Colonic mucosa (tissue), 4 donors: ENCODE measurements at regions of chr12 and their contacts with region 1.

Region 1: GRCh38 chr12:124786061-124786964 is 77.4 kb downstream of the SCARB1 start:
- DNase-seq: peak; percentile 49
- H3K4me3 ChIP-seq: no peak overlapping the region
- H3K27ac ChIP-seq: no peak overlapping the region
- H3K4me1 ChIP-seq: no peaks in the 10 kb centered on the region
- H3K27me3 ChIP-seq: no peaks in the 10 kb centered on the region
- CTCF ChIP-seq: no peak

Region 2: DNA sequence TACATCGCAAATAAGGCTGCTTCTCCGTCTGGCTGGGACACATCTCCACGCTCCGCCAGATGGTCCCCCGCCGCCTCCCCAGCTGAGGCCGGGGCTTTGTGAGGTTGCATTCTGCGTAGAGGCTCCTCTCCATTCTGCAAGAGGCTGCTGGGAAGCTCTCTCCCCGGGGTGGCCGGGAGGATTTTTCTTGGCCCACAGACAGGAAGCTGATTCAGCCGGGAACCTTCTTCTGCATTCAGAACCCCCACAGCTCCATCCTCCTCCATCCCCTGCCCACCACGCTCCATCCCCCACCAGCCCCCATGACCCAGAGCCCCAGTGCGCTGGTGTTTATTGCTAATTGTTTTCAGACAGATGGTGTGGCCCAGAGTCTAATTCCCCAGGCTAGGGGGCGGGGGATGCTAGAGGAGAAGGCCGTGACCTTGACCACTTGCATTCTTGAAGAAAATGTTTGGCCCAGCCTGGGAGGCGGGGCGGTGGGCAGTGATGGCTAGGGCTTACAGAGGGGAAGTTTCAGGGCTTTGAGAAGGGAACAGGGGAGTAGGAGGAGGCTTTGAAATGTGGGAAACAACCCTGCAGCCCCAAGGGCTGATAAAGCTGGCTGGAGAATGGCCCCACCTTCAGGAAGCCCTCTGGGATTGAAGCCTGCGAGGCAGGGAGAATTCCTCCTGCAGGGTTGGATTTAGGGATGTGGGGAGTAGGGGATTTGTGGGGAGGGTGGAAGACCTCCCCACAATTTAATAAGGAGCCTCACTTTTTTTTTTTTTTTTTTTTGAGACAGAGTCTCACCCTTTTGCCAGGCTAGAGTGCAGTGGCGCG is 130.4 kb before region 1 on chr12:
- intact Hi-C with region 1: no loop called
- DNase-seq: peak; percentile 66
- H3K4me3 ChIP-seq: no peak overlapping the region
- H3K27ac ChIP-seq: peak overlapping the region; percentile 77
- H3K4me1 ChIP-seq: no peaks in the 10 kb centered on the region
- H3K27me3 ChIP-seq: no peaks in the 10 kb centered on the region
- CTCF ChIP-seq: no peak

Region 3: GRCh38 chr12:124898200-124898922 is 112.0 kb after region 1 on chr12:
- intact Hi-C with region 1: loop called (anchors 5 kb)
- DNase-seq: peak; percentile 82
- H3K4me3 ChIP-seq: no peak overlapping the region
- H3K27ac ChIP-seq: no peak overlapping the region
- H3K4me1 ChIP-seq: no peaks in the 10 kb centered on the region
- H3K27me3 ChIP-seq: no peaks in the 10 kb centered on the region
- CTCF ChIP-seq: peak; percentile 53